T-cell (primary cell): ENCODE measurements at regions of chr5 and their contacts with region 1.

Region 1: GRCh38 chr5:65862384-65862783 is 64.0 kb upstream of the ERBIN start:
- DNase-seq: no peak
- ATAC-seq: no peak
- H3K4me3 ChIP-seq: no peak overlapping the region
- H3K4me3 Mint-ChIP-seq: no peak overlapping the region
- H3K27ac ChIP-seq: no peak overlapping the region
- H3K27ac Mint-ChIP-seq: no peak overlapping the region
- H3K4me1 ChIP-seq: peaks cover 7 to 12% of the 10 kb centered on the region in 2 experiments
- H3K4me1 Mint-ChIP-seq: peaks cover 26 to 33% (median 26%) of the 10 kb centered on the region in 3 donors
- H3K27me3 ChIP-seq: no peaks in the 10 kb centered on the region
- H3K27me3 Mint-ChIP-seq: no peaks in the 10 kb centered on the region

Region 2: DNA sequence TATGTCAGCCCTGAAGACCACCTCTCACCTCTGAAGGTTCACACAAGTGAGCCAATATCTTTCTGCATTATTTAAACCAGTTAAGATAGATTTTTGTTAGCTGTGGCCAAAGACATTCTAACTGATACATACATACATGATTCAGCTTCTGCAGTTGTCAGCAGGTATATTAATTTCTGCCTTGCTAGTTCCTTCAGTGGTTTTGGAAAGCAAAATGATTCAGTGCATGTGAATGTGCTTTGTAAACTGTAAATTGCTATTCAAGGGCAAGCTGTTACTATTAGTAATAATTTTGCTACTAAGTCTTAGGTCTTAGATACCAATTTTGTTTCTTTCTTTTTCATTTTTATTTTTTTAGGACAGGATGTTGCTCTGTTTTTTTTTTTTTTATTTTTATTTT is 25.2 kb before region 1 on chr5:
- CTCF ChIA-PET with region 1: no interaction called
- POLR2A ChIA-PET with region 1: interaction called, 4 to 12 read pairs
- DNase-seq: no peak
- ATAC-seq: no peak
- H3K4me3 ChIP-seq: no peak overlapping the region
- H3K4me3 Mint-ChIP-seq: no peak overlapping the region
- H3K27ac ChIP-seq: no peak overlapping the region
- H3K27ac Mint-ChIP-seq: no peak overlapping the region
- H3K4me1 ChIP-seq: no peaks in the 10 kb centered on the region
- H3K4me1 Mint-ChIP-seq: peaks cover 0 to 3% (median 2%) of the 10 kb centered on the region in 3 donors
- H3K27me3 ChIP-seq: no peaks in the 10 kb centered on the region
- H3K27me3 Mint-ChIP-seq: no peaks in the 10 kb centered on the region

Region 3: GRCh38 chr5:65880496-65881072 is 18.2 kb after region 1 on chr5:
- CTCF ChIA-PET with region 1: no interaction called
- POLR2A ChIA-PET with region 1: no interaction called
- DNase-seq: no peak
- ATAC-seq: no peak
- H3K4me3 ChIP-seq: no peak overlapping the region
- H3K4me3 Mint-ChIP-seq: no peak overlapping the region
- H3K27ac ChIP-seq: no peak overlapping the region
- H3K27ac Mint-ChIP-seq: no peak overlapping the region
- H3K4me1 ChIP-seq: no peaks in the 10 kb centered on the region
- H3K4me1 Mint-ChIP-seq: peaks cover 4 to 6% (median 4%) of the 10 kb centered on the region in 3 donors
- H3K27me3 ChIP-seq: no peaks in the 10 kb centered on the region
- H3K27me3 Mint-ChIP-seq: no peaks in the 10 kb centered on the region